Posterior vena cava (tissue), 2 donors: ENCODE measurements at regions of chr3 and their contacts with region 1.

Region 1: DNA sequence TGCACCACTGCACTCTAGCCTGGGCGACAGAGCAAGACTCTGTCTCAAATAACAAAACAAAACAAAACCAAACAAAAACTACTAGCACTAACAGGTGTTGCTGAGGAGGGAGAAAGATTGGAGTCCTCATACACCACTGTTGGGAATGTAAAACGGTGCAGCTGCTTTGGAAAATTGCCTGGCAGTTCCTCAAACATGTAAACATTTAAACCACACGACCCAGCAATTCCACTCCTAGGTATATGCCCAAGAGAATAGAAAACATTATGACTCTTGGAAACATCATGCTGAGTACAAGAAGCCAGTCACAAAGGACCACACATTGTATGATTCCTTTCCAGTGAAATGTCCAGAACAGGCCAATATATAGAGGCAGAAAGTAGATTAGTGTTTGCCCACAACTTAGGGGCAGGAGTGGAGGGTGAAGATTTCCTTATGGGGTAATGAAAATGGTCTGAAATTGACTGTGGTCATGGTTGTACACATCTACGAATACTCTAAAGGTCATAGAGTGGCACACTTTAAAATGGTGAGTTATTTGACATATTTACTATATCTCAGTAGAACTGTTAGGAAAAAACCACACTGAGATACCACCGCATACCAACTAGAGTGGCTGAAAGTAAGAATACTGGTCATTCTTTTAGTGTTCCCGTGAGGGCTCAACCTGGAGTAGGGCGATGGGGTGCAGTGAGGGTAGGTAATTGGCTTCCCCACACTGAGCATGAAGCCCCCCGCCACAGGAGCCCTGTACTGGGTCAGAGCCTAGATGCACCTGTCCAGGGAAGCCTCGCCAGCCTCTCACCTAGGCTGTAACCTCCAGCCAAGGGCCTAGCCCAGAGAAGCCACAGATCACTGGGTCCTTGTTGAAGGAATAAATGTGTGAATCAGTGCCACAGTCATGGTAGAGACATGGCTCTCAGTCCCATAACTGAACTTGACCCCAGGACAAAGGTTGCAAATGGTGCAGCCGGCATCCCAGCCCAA is 131.1 kb downstream of the NUP210 start:
- DNase-seq: peak; percentile 80

Region 2: GRCh38 chr3:13329746-13330145 is 40.7 kb after region 1 on chr3:
- intact Hi-C with region 1: loop called in 1 of 2 experiments (anchors 2 kb)
- DNase-seq: no peak